HepG2 (cell line): ENCODE measurements at regions of chr19 and their contacts with region 1.

Region 1: GRCh38 chr19:9796113-9796773 is 22.6 kb downstream of the FBXL12 start:
- DNase-seq: peak; percentile 86
- ATAC-seq: peak; percentile 71
- H3K4me3 ChIP-seq: no peak overlapping the region
- H3K27ac ChIP-seq: no peak overlapping the region
- H3K4me1 ChIP-seq: 0 out of 2 replicates have a peak, but pooled peaks cover under 1% of the 10 kb centered on the region
- H3K27me3 ChIP-seq: no peaks in the 10 kb centered on the region
- CTCF ChIP-seq: peak; percentile 92
- EP300 ChIP-seq: no peak
- POLR2A ChIP-seq: no peak
- RAD21 ChIP-seq: peak; percentile 83

Region 2: DNA sequence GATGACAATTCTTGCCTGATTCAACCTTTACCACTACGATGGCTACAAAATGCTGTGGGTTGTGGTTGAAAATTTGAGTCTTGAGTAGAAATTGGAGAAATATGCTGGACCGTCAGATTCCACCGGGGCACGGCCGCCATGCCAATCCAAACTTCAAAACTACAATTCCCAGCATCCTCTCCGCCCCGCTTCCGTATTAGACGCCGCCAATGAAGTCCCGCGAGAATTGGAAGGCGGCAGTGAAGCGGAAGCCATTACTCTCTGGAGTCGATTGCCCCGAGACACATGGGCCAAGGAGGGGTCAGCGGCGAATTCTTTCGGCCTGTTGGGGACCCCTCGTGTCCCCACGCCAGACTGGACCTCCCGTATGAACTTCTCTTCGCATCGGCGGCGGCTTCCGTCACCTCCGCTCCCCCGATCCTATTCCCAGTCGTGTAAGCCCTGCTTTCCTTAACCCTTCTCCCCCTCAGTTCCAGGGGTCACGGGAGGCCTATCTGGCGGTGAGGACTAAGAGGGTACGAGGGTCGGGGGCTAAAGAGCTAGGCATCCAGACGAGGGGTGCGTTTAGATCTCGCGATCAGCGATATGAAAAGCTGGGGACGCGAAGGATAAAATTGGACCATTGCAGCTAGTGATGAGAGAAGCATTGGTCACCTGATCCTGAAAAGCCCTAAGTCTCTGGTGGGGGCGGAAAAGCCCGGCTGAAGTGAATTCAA is 655.9 kb before region 1 on chr19 and contains the start of gene ZNF317:
- CTCF ChIA-PET with region 1: no interaction called
- POLR2A ChIA-PET with region 1: no interaction called
- in situ Hi-C with region 1: loop called (anchors 25 kb)
- intact Hi-C with region 1: loop called (anchors 2 kb)
- DNase-seq: peak; percentile 91
- ATAC-seq: peak; percentile 96
- H3K4me3 ChIP-seq: peak within 1 kb of the TSS; percentile 63 to 98 (median 95)
- H3K27ac ChIP-seq: peak within 1 kb of the TSS; percentile 80
- H3K4me1 ChIP-seq: peaks cover 20% of the 10 kb centered on the region
- H3K27me3 ChIP-seq: no peaks in the 10 kb centered on the region; a peak in 1 of 5 replicates
- CTCF ChIP-seq: 0 out of 2 replicates have a peak, but pooled peaks have one; percentile 8
- EP300 ChIP-seq: no peak
- POLR2A ChIP-seq: peak; percentile 90 to 92
- RAD21 ChIP-seq: no peak
- total RNA-seq, gene ZNF317: 27.9 and 31.0 TPM in 2 replicates

Region 3: GRCh38 chr19:9309139-9309973 is 486.9 kb before region 1 on chr19 and contains the start of gene ZNF699:
- CTCF ChIA-PET with region 1: no interaction called
- POLR2A ChIA-PET with region 1: no interaction called
- in situ Hi-C with region 1: loop called (anchors 5 kb)
- intact Hi-C with region 1: loop called (anchors 10 kb)
- DNase-seq: peak; percentile 87
- ATAC-seq: peak; percentile 87
- H3K4me3 ChIP-seq: peak within 1 kb of the TSS; percentile 71 to 77 (median 74)
- H3K27ac ChIP-seq: peak within 1 kb of the TSS; percentile 68
- H3K4me1 ChIP-seq: peaks cover 6% of the 10 kb centered on the region; the same call in 1 of the 2 replicates
- H3K27me3 ChIP-seq: no peaks in the 10 kb centered on the region
- CTCF ChIP-seq: no peak
- EP300 ChIP-seq: no peak
- POLR2A ChIP-seq: peak in 1 of 2 experiments; percentile 56; a peak in 1 of 4 replicates
- RAD21 ChIP-seq: no peak
- total RNA-seq, gene ZNF699: 2.2 and 2.7 TPM in 2 replicates

Region 4: GRCh38 chr19:9584073-9584833 is 212.0 kb before region 1 on chr19 and contains the start of gene ZNF121:
- CTCF ChIA-PET with region 1: interaction called, 15 read pairs
- POLR2A ChIA-PET with region 1: no interaction called
- in situ Hi-C with region 1: no loop called
- intact Hi-C with region 1: loop called (anchors 2 kb)
- DNase-seq: peak; percentile 77
- ATAC-seq: peak; percentile 91
- H3K4me3 ChIP-seq: peak within 1 kb of the TSS; percentile 78 to 92 (median 79)
- H3K27ac ChIP-seq: peak within 1 kb of the TSS; percentile 85
- H3K4me1 ChIP-seq: peaks cover 39% of the 10 kb centered on the region
- H3K27me3 ChIP-seq: no peaks in the 10 kb centered on the region; a peak in 1 of 5 replicates
- CTCF ChIP-seq: peak; percentile 3; the same call in 1 of the 2 replicates
- EP300 ChIP-seq: no peak
- POLR2A ChIP-seq: peak; percentile 93 to 95
- RAD21 ChIP-seq: no peak
- total RNA-seq, gene ZNF121: 56.3 and 78.4 TPM in 2 replicates

Region 5: GRCh38 chr19:9621156-9622037 is 174.8 kb before region 1 on chr19 and contains the start of gene ZNF561:
- CTCF ChIA-PET with region 1: interaction called, 50 read pairs
- POLR2A ChIA-PET with region 1: no interaction called
- in situ Hi-C with region 1: loop called (anchors 5 kb)
- intact Hi-C with region 1: no loop called
- DNase-seq: peak; percentile 86
- ATAC-seq: peak; percentile 92
- H3K4me3 ChIP-seq: peak within 1 kb of the TSS; percentile 87 to 97 (median 91)
- H3K27ac ChIP-seq: peak within 1 kb of the TSS; percentile 99
- H3K4me1 ChIP-seq: peaks cover 25% of the 10 kb centered on the region
- H3K27me3 ChIP-seq: no peaks in the 10 kb centered on the region; a peak in 1 of 5 replicates
- CTCF ChIP-seq: peak; percentile 14
- EP300 ChIP-seq: no peak
- POLR2A ChIP-seq: peak; percentile 70 to 78
- RAD21 ChIP-seq: no peak
- total RNA-seq, gene ZNF561: 35.1 and 54.3 TPM in 2 replicates

Region 6: DNA sequence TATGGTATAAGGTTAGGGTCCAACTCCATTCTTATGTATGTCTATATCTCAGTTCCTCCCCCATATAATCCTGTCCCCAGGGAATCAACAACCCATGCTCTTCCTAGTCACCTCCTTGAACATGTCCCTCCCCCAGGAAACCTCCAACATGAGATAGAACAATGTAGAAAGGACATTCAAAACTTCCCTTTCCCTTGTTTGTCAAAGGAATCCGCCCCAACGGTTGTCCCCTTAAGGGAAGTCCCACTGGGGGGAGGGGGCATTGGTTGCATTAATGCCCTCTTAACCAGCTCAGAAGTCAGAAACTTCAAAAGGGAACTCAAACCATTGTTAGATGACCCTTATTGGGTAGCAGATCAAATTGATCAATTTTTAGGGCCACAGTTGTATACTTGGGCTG is 168.4 kb before region 1 on chr19:
- CTCF ChIA-PET with region 1: interaction called, 50 read pairs
- POLR2A ChIA-PET with region 1: no interaction called
- in situ Hi-C with region 1: loop called (anchors 5 kb)
- intact Hi-C with region 1: no loop called
- DNase-seq: no peak
- ATAC-seq: no peak
- H3K4me3 ChIP-seq: no peak overlapping the region
- H3K27ac ChIP-seq: no peak overlapping the region
- H3K4me1 ChIP-seq: peaks cover 3% of the 10 kb centered on the region; the same call in 1 of the 2 replicates
- H3K27me3 ChIP-seq: no peaks in the 10 kb centered on the region
- CTCF ChIP-seq: no peak
- EP300 ChIP-seq: no peak
- POLR2A ChIP-seq: no peak
- RAD21 ChIP-seq: no peak

Region 7: GRCh38 chr19:9700229-9700981 is 95.8 kb before region 1 on chr19:
- CTCF ChIA-PET with region 1: no interaction called
- POLR2A ChIA-PET with region 1: no interaction called
- in situ Hi-C with region 1: no loop called
- intact Hi-C with region 1: no loop called
- DNase-seq: no peak
- ATAC-seq: no peak
- H3K4me3 ChIP-seq: no peak overlapping the region
- H3K27ac ChIP-seq: no peak overlapping the region
- H3K4me1 ChIP-seq: 0 out of 2 replicates have a peak, but pooled peaks cover 7% of the 10 kb centered on the region
- H3K27me3 ChIP-seq: no peaks in the 10 kb centered on the region; a peak in 1 of 5 replicates
- CTCF ChIP-seq: no peak
- EP300 ChIP-seq: no peak
- POLR2A ChIP-seq: no peak
- RAD21 ChIP-seq: no peak

Region 8: GRCh38 chr19:9818734-9819589 is 22.7 kb after region 1 on chr19 and contains the start of gene FBXL12:
- CTCF ChIA-PET with region 1: no interaction called
- POLR2A ChIA-PET with region 1: interaction called, 3 read pairs
- in situ Hi-C with region 1: no loop called
- intact Hi-C with region 1: loop called (anchors 1 kb)
- DNase-seq: peak; percentile 97
- ATAC-seq: peak; percentile 87
- H3K4me3 ChIP-seq: peak within 1 kb of the TSS; percentile 81 to 95 (median 84)
- H3K27ac ChIP-seq: peak within 1 kb of the TSS; percentile 93
- H3K4me1 ChIP-seq: peaks cover 33% of the 10 kb centered on the region
- H3K27me3 ChIP-seq: no peaks in the 10 kb centered on the region; a peak in 1 of 5 replicates
- CTCF ChIP-seq: no peak
- EP300 ChIP-seq: no peak
- POLR2A ChIP-seq: peak; percentile 94 to 97
- RAD21 ChIP-seq: peak; percentile 32; the same call in 1 of the 2 replicates
- total RNA-seq, gene FBXL12: 19.0 and 20.4 TPM in 2 replicates